WTC11 (cell line): ENCODE measurements at regions of chr15 and their contacts with region 1.

Region 1: GRCh38 chr15:31128919-31129768 is 27.6 kb upstream of the TRPM1 start:
- DNase-seq: peak; percentile 88
- ATAC-seq: peak; percentile 91
- H3K4me3 Mint-ChIP-seq: no peak overlapping the region
- H3K27ac Mint-ChIP-seq: no peak overlapping the region
- H3K4me1 Mint-ChIP-seq: peaks cover 4% of the 10 kb centered on the region; the same call in 1 of the 2 replicates
- H3K27me3 Mint-ChIP-seq: no peaks in the 10 kb centered on the region
- CTCF ChIP-seq: peak; percentile 95

Region 2: DNA sequence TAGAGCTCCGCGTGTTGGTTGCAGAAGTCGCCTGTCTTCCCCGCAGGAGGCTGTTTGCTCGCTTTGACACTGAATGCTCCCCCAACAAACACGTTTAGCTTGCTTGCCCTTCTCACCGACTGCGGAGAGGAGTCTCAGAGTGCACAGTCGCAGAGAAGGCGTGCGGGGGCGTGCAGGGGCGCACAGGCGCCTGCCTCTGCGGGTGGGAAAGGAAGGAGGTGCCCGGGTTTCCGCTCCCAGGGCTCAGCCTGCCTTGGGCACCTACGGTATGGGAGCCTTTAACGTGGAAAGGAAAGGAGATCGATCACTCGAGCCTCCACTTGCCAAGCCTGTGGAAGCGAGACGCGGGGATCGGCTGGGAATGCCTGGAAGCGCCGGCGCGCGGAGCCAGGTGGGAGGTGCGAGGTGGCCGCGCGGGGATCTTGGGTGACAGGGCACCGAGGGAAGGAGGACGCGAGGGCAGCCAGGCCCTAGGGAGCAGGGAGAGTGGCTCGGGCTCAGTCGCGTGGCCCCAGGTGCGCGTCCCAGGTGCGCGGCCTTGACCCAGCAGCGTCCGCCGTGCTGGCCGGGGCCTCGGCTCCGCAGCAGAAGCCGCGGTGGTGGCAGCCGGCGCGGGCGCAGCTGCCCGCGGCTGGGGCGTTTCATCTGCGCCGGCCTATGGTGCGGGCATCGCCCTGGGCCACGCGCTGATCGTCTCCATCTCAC is 225.5 kb before region 1 on chr15 and contains the start of gene FAN1:
- CTCF ChIA-PET with region 1: interaction called, 25 read pairs
- POLR2A ChIA-PET with region 1: no interaction called
- DNase-seq: peak; percentile 84
- ATAC-seq: peak; percentile 92
- H3K4me3 Mint-ChIP-seq: peak within 1 kb of the TSS; percentile 85
- H3K27ac Mint-ChIP-seq: peak within 1 kb of the TSS; percentile 75
- H3K4me1 Mint-ChIP-seq: peaks cover 14% of the 10 kb centered on the region
- H3K27me3 Mint-ChIP-seq: no peaks in the 10 kb centered on the region; the same call in 1 of the 2 replicates
- CTCF ChIP-seq: no peak
- total RNA-seq, gene FAN1: 22.8 to 31.5 TPM (median 30.3 TPM) in 3 replicates

Region 3: DNA sequence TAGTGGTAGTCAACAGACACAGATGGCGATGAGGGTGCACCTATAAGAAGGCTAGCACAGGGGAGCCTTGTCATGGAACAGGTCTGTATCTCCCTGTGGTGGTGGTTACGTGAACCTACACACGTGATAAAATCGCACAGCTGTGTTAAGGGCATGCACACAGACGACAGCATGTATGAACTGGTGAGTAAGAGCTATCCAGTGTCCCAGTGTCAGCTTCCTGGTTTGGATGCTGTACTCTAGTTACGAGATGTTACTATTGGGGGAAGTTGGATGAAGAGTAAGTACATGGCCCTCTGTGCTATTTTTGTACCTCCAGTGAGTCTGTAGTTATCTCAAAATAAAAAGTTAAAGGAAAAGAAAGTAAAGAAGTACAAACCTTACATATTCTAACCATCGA is 176.0 kb before region 1 on chr15:
- CTCF ChIA-PET with region 1: interaction called, 11 read pairs
- POLR2A ChIA-PET with region 1: no interaction called
- DNase-seq: no peak
- ATAC-seq: no peak
- H3K4me3 Mint-ChIP-seq: no peak overlapping the region
- H3K27ac Mint-ChIP-seq: no peak overlapping the region
- H3K4me1 Mint-ChIP-seq: 0 out of 2 replicates have a peak, but pooled peaks cover 2% of the 10 kb centered on the region
- H3K27me3 Mint-ChIP-seq: no peaks in the 10 kb centered on the region
- CTCF ChIP-seq: no peak

Region 4: DNA sequence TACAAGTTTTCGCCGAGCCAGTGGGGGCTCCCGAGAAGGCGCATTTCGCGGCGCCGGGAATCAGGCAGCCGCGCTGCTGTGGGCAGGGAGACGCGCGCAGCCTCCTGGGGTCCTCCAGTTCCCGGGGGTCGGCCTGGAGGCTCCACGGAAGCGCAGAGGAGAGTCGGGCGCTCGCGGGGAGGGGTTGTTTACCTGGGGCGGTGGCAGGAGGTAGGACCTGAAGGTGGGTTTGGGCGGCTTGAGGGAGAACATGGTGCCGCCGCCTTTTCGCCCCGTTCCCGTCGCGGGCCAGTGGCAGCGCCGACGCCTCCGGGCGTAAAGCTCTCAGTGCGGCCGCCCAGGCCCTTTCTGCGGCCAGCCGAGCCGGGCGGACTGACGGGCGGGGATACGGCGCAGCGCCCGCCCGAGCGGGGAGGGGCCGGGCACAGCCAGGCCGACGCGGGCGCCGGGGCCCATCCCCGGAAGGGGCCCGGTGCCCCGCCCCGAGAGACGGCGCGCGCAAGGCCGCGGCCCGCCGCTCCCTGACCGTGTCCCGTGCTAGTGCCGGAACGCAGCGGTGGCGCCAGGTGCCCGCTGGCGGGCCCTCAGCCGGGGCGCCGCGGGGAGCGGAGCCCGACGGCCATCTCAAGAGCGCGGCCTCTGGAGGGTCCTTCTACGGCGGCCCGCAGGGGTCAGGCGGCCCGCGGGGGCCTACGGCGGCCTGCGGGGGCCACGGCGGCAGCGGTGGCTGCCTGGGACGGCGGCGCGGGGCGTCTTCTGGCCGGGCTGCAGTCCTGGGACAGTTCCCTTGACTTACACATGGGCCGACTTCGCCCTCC is 137.7 kb before region 1 on chr15 and contains the start of gene MTMR10:
- CTCF ChIA-PET with region 1: interaction called, 13 read pairs
- POLR2A ChIA-PET with region 1: no interaction called
- DNase-seq: peak; percentile 70
- ATAC-seq: peak; percentile 91
- H3K4me3 Mint-ChIP-seq: peak within 1 kb of the TSS; percentile 92
- H3K27ac Mint-ChIP-seq: peak within 1 kb of the TSS; percentile 94
- H3K4me1 Mint-ChIP-seq: peaks cover 24% of the 10 kb centered on the region
- H3K27me3 Mint-ChIP-seq: no peaks in the 10 kb centered on the region
- CTCF ChIP-seq: no peak
- total RNA-seq, gene MTMR10: 15.3 to 17.3 TPM (median 15.9 TPM) in 3 replicates

Region 5: DNA sequence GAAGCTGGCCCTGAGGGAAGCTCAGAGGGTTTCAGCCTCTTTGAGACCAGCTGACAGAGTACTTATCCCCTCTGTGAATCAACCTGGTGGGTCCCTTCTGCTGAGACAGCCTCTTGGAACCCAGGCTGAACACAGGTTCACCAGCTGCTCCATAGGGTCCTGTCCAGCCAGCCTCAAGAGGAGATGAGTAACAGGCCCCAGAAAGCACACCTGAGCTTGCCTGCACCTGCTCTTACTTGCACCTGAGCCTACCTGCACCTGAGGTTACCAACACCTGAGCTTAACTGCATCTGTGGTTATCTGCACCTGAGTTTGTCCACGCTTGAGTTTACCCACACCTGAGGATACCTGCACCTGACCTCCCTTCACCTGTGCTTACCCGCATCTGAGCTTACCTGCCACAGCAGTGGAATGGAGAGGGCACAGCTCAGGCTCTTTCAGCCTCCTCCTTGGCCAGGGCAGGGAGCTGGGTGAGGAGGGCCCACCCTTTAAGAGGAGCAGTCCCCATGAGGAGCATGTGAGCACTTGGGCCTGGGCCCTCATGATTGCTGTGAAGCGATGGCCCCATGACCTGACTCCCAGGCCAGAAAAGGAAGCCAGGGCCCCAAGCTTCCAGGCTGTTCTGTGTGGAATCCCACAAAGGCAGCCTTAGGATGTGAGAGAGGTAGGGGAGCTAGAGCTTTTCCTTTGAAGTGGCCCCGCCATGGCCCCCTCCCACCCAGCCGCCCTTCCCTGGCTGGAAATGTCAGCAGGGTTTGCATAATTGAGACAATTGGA is 27.7 kb before region 1 on chr15 and contains the start of gene TRPM1:
- CTCF ChIA-PET with region 1: interaction called, 27 read pairs
- POLR2A ChIA-PET with region 1: interaction called, 3 read pairs
- DNase-seq: no peak
- ATAC-seq: no peak; the same call in 1 of the 2 replicates
- H3K4me3 Mint-ChIP-seq: no peak within 1 kb of the TSS
- H3K27ac Mint-ChIP-seq: no peak within 1 kb of the TSS
- H3K4me1 Mint-ChIP-seq: peaks cover 23% of the 10 kb centered on the region
- H3K27me3 Mint-ChIP-seq: no peaks in the 10 kb centered on the region
- CTCF ChIP-seq: no peak
- total RNA-seq, gene TRPM1: 0.32 to 1.2 TPM (median 0.77 TPM) in 3 replicates

Region 6: DNA sequence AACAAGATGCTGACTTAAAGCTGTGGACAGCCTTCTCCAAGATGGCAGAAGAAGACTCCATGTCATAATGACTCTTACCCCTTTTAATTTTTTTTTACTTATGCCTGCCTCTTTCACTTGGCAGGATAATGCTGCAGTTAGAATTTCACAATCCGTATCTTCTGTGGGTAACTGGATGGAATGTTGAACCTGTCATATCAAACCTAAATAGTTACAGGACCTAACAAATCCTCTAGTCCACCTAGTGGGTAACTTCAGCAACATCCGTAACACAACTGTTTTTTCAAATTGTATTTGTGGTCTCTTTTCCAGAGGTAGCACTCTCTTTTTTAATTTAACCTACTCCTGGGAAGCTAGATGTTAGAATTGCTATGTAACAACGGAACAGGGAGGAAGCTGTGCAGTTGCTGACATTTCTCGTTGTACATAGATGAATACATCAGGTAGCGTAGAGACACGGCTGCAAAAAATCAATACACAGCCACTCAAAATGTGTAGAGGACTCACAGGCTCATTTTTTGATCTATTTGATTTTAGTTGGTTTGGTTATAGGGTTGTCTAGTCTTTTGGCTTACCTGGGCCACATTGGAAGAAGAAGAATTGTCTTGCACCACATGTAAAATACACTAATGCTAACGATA is 16.2 kb after region 1 on chr15:
- CTCF ChIA-PET with region 1: interaction called, 29 read pairs
- POLR2A ChIA-PET with region 1: interaction called, 3 read pairs
- DNase-seq: no peak
- ATAC-seq: no peak
- H3K4me3 Mint-ChIP-seq: no peak overlapping the region
- H3K27ac Mint-ChIP-seq: 0 out of 2 replicates have a peak overlapping the region, but pooled peaks have one; percentile 22
- H3K4me1 Mint-ChIP-seq: peaks cover 55% of the 10 kb centered on the region
- H3K27me3 Mint-ChIP-seq: no peaks in the 10 kb centered on the region; the same call in 1 of the 2 replicates
- CTCF ChIP-seq: no peak

Region 7: DNA sequence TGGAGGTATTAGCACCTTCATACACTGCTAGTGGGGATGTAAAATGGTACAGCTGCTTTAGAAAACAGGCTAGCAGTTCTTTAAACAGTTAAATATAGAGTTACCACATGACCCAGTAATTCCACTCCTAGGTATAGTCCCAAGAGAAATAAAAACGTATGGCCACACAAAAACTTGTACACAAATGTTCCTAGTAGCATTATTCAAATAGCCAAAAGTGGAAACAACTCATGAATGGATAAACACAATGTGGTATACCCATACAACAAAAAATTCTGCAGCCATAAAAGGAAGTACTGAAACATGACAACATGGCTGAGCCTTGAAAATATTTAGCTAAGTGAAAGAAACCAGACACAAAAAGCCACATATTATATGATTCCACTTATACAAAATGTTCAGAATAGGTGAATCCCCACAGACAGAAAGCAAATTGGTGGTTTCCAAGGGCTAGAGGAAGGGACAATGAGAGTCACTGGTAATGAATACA is 156.7 kb after region 1 on chr15:
- CTCF ChIA-PET with region 1: no interaction called
- POLR2A ChIA-PET with region 1: no interaction called
- DNase-seq: no peak
- ATAC-seq: no peak
- H3K4me3 Mint-ChIP-seq: no peak overlapping the region
- H3K27ac Mint-ChIP-seq: no peak overlapping the region
- H3K4me1 Mint-ChIP-seq: peaks cover under 1% of the 10 kb centered on the region; the same call in 1 of the 2 replicates
- H3K27me3 Mint-ChIP-seq: no peaks in the 10 kb centered on the region; the same call in 1 of the 2 replicates
- CTCF ChIP-seq: no peak